Calu3 (cell line): ENCODE measurements at regions of chr19 and their contacts with region 1.

Region 1: GRCh38 chr19:35090506-35091237 is 25.0 kb upstream of the FXYD3 start:
- DNase-seq: peak; percentile 83
- H3K4me3 Mint-ChIP-seq: peak overlapping the region; percentile 46
- H3K27ac Mint-ChIP-seq: peak overlapping the region; percentile 48
- H3K4me1 Mint-ChIP-seq: peaks cover 49% of the 10 kb centered on the region
- H3K27me3 Mint-ChIP-seq: no peaks in the 10 kb centered on the region
- CTCF ChIP-seq: peak; percentile 89

Region 2: GRCh38 chr19:34943861-34944573 is 146.7 kb before region 1 on chr19:
- CTCF ChIA-PET with region 1: no interaction called
- intact Hi-C with region 1: no loop called
- DNase-seq: no peak
- H3K4me3 Mint-ChIP-seq: no peak overlapping the region
- H3K27ac Mint-ChIP-seq: no peak overlapping the region
- H3K4me1 Mint-ChIP-seq: no peaks in the 10 kb centered on the region
- H3K27me3 Mint-ChIP-seq: no peaks in the 10 kb centered on the region
- CTCF ChIP-seq: no peak

Region 3: DNA sequence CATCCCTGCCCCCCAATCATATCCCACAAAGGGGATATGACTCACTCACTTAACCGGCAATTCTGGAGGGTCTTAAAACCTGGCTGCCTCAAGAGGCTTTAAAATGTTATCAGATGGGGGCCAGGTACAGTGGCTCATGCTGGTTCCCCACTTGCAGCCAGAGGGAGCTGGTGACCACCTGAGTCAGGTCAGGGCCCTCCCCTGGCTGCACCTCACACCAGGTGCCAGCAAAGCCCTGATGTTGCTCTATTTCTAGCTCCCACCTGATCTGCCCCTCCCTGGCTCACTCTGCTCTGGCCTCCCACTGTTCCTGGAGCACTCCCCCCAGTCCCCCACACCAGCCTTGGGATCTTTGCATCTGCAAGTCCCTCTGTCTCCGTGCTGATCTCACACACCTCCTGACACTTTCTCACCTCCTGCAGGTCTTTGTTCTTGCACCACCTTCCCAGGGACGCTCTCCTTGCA is 34.9 kb before region 1 on chr19:
- CTCF ChIA-PET with region 1: no interaction called
- intact Hi-C with region 1: loop called (anchors 1 kb)
- DNase-seq: peak; percentile 77
- H3K4me3 Mint-ChIP-seq: no peak overlapping the region
- H3K27ac Mint-ChIP-seq: no peak overlapping the region
- H3K4me1 Mint-ChIP-seq: peaks cover 9% of the 10 kb centered on the region
- H3K27me3 Mint-ChIP-seq: no peaks in the 10 kb centered on the region
- CTCF ChIP-seq: peak; percentile 77